Left ventricle myocardium superior (tissue), 1 donor: ENCODE measurements at regions of chr9 and their contacts with region 1.

Region 1: DNA sequence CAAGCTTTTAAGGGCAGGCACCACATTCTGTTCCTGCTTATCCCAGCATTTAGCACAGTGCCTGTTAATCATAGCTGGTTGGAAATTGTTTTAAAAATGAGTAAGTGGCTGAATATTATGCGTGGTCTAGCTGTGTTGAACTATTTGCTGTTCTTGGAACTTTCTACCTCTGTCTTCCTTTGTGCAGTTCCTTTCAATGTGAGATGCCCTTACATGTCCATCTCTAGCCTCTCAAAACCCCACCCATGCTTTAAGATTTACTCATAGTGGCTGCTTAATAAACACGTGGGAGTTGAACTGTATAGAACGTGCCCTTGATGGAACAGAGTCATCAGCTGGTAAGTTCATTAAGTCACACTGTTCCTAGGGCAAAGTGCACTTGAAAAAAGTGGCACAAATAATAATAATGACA is 34.5 kb downstream of the C9orf57 start:
- DNase-seq: no peak
- ATAC-seq: no peak

Region 2: DNA sequence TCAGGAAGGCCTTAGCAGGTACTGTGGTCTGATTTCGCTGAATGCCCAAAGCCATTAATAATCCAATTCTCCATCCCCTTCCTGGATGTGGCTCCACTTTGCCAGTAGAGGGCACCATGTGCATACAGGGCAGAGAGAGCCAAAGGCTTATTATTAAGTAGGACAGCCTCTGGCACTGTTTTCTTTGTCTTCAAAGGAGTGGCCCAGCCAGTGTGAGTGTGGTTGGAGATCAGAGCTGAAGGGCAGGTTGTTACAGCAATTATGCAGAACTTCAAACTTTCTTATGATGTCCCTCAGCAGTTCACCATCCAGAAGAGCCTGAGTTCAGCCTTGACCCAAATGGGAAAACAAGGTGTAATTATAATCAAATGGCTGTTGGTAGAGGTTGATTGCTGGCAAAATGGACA is 219.0 kb before region 1 on chr9:
- intact Hi-C with region 1: loop called (anchors 5 kb)
- DNase-seq: peak; percentile 51
- ATAC-seq: peak; percentile 99